ENCODE measurements at regions of chr17 and their contacts with region 1.

Region 1: GRCh38 chr17:75589012-75589918 is 1.7 kb downstream of the MYO15B start:
- DNase-seq: peak; percentile 97
- ATAC-seq: peak; percentile 84
- H3K4me3 Mint-ChIP-seq: peak overlapping the region; percentile 84
- H3K27ac Mint-ChIP-seq: peak overlapping the region; percentile 73
- H3K4me1 Mint-ChIP-seq: peaks cover 16% of the 10 kb centered on the region
- H3K27me3 Mint-ChIP-seq: no peaks in the 10 kb centered on the region
- CTCF ChIP-seq: no peak

Region 2: GRCh38 chr17:75412455-75413317 is 176.6 kb before region 1 on chr17:
- CTCF ChIA-PET with region 1: no interaction called
- POLR2A ChIA-PET with region 1: interaction called, 4 read pairs
- intact Hi-C with region 1: loop called (anchors 5 kb)
- DNase-seq: peak; percentile 63
- ATAC-seq: peak; percentile 94
- H3K4me3 Mint-ChIP-seq: peak overlapping the region; percentile 53
- H3K27ac Mint-ChIP-seq: peak overlapping the region; percentile 63
- H3K4me1 Mint-ChIP-seq: peaks cover 12% of the 10 kb centered on the region
- H3K27me3 Mint-ChIP-seq: no peaks in the 10 kb centered on the region
- CTCF ChIP-seq: peak; percentile 9

Region 3: DNA sequence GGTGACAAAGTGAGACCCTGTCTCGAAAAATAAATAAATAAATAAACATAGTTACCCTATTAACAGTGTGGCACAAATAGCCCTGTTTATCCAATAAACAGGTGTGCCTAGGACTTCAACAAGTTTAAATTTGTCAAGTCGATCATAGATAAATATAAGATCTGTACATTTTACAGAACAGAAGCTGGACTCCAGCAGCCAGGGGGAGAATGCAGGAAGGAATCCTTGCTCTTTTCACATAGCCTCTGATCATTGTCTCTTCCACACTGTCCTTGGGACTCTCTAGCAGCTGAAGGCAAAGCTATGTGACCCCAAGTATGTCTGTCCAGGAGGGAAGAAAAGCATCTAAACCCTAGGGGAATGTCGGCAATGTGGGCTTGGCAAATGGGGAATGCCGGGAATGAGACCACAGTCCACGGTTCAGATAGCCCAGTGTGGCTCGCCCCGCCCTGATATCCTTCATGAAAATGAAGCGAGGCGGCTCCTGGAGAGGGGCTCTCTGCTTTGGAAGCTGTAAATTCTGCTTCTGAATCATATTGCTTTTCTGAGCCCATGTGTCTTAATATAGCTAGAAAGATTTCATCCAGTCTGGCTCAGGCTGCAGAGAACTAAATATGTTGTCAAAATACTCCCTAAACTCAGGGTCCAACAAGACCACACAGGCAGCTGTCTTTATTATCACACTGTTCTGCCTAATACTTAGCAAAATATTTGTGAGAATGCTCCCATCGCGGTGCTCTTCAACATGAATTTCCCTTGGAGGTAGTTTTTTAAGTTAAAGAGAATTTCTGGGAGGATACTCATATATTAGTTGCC is 158.9 kb before region 1 on chr17:
- CTCF ChIA-PET with region 1: interaction called, 3 read pairs
- POLR2A ChIA-PET with region 1: no interaction called
- intact Hi-C with region 1: loop called (anchors 1 kb)
- DNase-seq: no peak
- ATAC-seq: no peak
- H3K4me3 Mint-ChIP-seq: no peak overlapping the region
- H3K27ac Mint-ChIP-seq: no peak overlapping the region
- H3K4me1 Mint-ChIP-seq: peaks cover 10% of the 10 kb centered on the region
- H3K27me3 Mint-ChIP-seq: peaks cover 9% of the 10 kb centered on the region
- CTCF ChIP-seq: no peak

Region 4: DNA sequence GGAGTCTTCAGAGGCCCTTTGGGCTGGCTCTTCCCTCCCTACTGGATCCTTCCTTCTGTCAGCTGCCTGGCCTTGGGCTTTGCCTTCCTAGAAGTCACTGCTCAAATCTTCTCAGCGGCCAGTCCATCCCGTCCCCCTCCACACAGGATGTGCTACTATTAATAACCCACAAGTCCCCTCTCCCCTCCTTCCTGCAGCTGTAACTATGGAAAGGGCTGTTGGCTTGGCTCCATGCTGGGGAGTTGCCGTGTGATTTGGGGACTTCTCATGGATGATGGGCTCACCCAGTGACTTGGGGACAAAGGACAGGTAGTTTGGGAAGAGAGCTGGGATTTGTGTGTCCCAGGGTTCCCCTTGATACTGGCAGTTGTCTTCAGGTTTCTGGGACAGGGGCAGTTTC is 113.4 kb before region 1 on chr17:
- CTCF ChIA-PET with region 1: no interaction called
- POLR2A ChIA-PET with region 1: no interaction called
- intact Hi-C with region 1: no loop called
- DNase-seq: no peak
- ATAC-seq: no peak
- H3K4me3 Mint-ChIP-seq: no peak overlapping the region
- H3K27ac Mint-ChIP-seq: no peak overlapping the region
- H3K4me1 Mint-ChIP-seq: no peaks in the 10 kb centered on the region
- H3K27me3 Mint-ChIP-seq: no peaks in the 10 kb centered on the region
- CTCF ChIP-seq: no peak

Region 5: DNA sequence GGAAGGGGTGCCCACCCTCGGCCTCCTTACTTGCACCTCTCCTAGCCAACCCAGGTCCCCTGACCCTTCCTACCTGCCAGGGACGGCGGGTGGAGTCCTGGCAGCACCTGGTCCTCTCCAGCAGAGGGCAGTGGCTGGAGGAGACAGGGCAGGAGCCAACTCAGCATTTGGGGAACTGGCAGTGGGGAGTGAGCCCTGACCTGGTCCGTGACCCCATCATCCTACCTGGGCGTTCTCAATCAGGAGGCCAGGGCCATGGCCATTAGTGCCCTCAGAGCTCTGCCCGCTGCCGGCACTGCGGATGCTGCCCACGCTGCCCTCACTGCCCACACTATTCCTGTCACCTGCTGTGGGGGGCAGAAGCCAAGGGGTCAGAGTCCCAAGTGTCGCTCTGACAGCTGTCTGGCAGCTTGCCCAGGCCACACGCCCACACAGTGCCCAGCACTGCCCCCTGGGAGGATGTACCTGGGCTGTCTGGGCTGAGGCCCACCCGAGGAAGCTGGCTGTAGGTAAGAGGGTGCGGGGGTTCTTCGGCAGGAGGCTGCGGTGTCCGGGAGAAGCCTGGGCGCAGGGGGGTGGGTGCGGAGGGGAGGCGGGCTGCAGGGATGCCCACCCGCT is 84.8 kb before region 1 on chr17:
- CTCF ChIA-PET with region 1: no interaction called
- POLR2A ChIA-PET with region 1: no interaction called
- intact Hi-C with region 1: loop called (anchors 1 kb)
- DNase-seq: peak; percentile 41
- ATAC-seq: peak; percentile 91
- H3K4me3 Mint-ChIP-seq: no peak overlapping the region
- H3K27ac Mint-ChIP-seq: no peak overlapping the region
- H3K4me1 Mint-ChIP-seq: peaks cover 2% of the 10 kb centered on the region
- H3K27me3 Mint-ChIP-seq: no peaks in the 10 kb centered on the region
- CTCF ChIP-seq: no peak

Region 6: DNA sequence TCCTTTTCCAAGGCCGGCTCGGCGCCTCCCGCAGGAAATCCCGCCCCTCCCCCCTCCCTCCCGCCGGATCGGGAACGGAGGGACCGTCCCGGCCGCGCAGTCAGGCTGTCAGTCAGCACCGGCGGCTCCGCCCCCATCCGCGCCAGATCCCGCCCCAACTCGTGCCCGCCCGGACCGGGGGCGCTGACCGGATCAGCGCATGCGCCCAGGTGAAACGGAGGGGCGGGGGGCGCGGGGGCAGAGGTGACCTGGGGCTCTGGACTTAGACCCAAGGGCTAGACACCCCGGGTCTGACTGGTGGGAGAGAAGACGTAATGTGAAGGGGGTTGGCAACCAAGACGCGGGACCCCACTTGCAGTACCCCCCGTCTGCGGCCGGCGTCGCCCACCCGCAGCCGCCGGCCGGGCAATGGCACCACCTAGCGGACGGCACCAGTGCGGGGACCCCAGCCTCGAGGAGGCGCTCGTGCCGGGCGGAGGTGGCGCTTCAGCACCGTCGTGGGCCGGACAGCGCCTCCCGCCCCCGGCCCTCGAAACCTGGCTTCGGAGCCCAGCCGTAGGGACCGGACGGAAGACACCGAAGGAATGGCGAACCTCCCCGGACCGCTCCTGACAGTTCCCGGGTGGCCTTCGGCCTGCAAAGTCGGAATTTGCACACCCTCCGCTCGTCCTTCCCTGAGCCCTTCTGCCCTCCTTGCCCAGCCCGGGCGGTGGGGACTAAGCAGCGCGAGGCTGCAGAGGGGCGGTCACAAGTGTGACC is 73.6 kb before region 1 on chr17 and contains the start of gene CASKIN2:
- CTCF ChIA-PET with region 1: interaction called, 14 read pairs
- POLR2A ChIA-PET with region 1: interaction called, 10 read pairs
- intact Hi-C with region 1: loop called (anchors 1 kb)
- DNase-seq: peak; percentile 80
- ATAC-seq: peak; percentile 68
- H3K4me3 Mint-ChIP-seq: peak within 1 kb of the TSS; percentile 82
- H3K27ac Mint-ChIP-seq: no peak within 1 kb of the TSS
- H3K4me1 Mint-ChIP-seq: peaks cover 22% of the 10 kb centered on the region
- H3K27me3 Mint-ChIP-seq: no peaks in the 10 kb centered on the region
- CTCF ChIP-seq: peak; percentile 43
- total RNA-seq, gene CASKIN2: 1.2 and 1.4 TPM in 2 replicates

Region 7: GRCh38 chr17:75524953-75525719 is 64.1 kb before region 1 on chr17 and contains the start of gene LLGL2:
- CTCF ChIA-PET with region 1: interaction called, 3 read pairs
- POLR2A ChIA-PET with region 1: interaction called, 6 read pairs
- intact Hi-C with region 1: loop called (anchors 1 kb)
- DNase-seq: peak; percentile 88
- ATAC-seq: peak; percentile 94
- H3K4me3 Mint-ChIP-seq: peak within 1 kb of the TSS; percentile 77
- H3K27ac Mint-ChIP-seq: peak within 1 kb of the TSS; percentile 18
- H3K4me1 Mint-ChIP-seq: peaks cover 10% of the 10 kb centered on the region
- H3K27me3 Mint-ChIP-seq: no peaks in the 10 kb centered on the region
- CTCF ChIP-seq: no peak
- total RNA-seq, gene LLGL2: 27.5 and 29.9 TPM in 2 replicates

Region 8: DNA sequence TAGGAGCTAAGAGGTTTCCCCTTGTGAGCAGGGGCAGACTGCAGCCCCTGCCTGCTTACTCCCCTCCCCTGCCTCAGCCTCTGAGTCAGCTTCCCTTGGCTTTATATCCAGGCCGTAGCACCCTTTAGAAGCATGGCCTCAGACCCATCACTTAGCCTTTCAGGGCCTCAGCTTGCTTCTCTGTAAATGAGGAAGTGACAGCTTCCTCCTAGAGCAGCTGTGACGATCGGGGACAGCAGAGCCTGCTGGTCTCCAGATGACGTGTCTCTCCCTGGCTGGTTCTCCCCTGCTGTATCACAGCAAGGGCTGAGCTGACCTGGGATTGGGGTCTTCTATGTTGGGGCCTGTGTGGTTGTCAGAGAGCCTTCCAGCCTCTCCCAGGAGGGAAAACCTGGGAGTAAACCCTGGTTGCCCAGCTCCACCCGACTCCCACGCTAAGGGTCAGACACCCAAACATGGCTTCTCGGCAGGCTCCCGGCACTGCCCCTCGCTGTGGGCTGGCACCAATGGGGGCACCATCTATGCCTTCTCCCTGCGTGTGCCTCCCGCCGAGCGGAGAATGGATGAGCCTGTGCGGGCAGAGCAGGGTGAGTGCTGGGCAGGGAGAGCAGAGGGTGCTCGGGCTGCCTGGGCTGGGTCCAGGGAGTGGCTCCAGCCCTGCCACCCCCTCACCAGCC is 17.9 kb before region 1 on chr17:
- CTCF ChIA-PET with region 1: interaction called, 9 read pairs
- POLR2A ChIA-PET with region 1: interaction called, 29 read pairs
- intact Hi-C with region 1: loop called (anchors 1 kb)
- DNase-seq: peak; percentile 56
- ATAC-seq: peak; percentile 98
- H3K4me3 Mint-ChIP-seq: peak overlapping the region; percentile 64
- H3K27ac Mint-ChIP-seq: peak overlapping the region; percentile 92
- H3K4me1 Mint-ChIP-seq: peaks cover 22% of the 10 kb centered on the region
- H3K27me3 Mint-ChIP-seq: no peaks in the 10 kb centered on the region
- CTCF ChIP-seq: no peak

Measured in activated B cell treated with CpG ODN at 0.5 μM for 24 hours (primary cell).